ENCODE measurements at regions of chr7 and their contacts with region 1.

Region 1: DNA sequence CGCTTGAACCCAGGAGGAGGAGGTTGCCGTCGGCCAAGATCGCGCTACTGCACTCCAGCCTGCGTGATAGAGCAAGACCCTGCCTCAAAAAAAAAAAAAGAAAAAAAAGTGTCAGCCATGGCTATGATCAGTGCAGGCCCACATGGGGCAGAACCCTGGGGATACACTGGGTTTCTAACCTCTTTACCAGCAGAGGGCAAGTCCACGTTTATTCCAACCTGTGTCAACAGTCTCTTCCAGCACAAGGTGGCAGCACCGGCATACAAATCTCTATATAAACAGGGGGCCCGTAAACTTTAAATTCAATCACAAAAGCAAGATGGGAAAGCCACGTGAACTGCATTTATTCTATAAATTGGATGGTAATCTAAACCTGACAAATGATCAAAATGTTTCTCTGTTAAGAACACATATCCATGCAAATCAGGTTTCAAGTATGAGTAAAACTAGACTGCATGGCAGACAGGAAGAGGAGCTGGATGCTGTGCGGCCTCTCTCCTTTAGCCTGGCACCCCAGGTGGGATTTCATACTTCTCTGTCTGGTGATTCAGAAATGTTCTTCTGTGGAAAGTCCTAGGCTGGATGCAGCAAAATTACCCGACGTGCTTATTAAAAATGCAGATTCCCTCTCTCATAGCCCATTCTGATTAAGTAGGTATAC is 60.0 kb upstream of the STEAP1B start:
- DNase-seq: peak; percentile 84
- H3K4me3 ChIP-seq: no peak overlapping the region
- H3K27ac ChIP-seq: peak overlapping the region; percentile 99
- H3K27me3 ChIP-seq: no peaks in the 10 kb centered on the region
- CTCF ChIP-seq: peak; percentile 95

Region 2: GRCh38 chr7:22726345-22727185 is 166.6 kb after region 1 on chr7:
- in situ Hi-C with region 1: loop called (anchors 25 kb)
- DNase-seq: peak; percentile 94
- H3K4me3 ChIP-seq: peak overlapping the region; percentile 75
- H3K27ac ChIP-seq: peak overlapping the region; percentile 96
- H3K27me3 ChIP-seq: no peaks in the 10 kb centered on the region
- CTCF ChIP-seq: peak; percentile 83

Region 3: GRCh38 chr7:23055582-23056178 is 495.7 kb after region 1 on chr7:
- in situ Hi-C with region 1: loop called (anchors 25 kb)
- DNase-seq: peak; percentile 73
- H3K4me3 ChIP-seq: no peak overlapping the region
- H3K27ac ChIP-seq: no peak overlapping the region
- H3K27me3 ChIP-seq: no peaks in the 10 kb centered on the region
- CTCF ChIP-seq: peak; percentile 89

Measured in brain microvascular endothelial cell (primary cell).